A673 (cell line): ENCODE measurements at regions of chr16 and their contacts with region 1.

Region 1: DNA sequence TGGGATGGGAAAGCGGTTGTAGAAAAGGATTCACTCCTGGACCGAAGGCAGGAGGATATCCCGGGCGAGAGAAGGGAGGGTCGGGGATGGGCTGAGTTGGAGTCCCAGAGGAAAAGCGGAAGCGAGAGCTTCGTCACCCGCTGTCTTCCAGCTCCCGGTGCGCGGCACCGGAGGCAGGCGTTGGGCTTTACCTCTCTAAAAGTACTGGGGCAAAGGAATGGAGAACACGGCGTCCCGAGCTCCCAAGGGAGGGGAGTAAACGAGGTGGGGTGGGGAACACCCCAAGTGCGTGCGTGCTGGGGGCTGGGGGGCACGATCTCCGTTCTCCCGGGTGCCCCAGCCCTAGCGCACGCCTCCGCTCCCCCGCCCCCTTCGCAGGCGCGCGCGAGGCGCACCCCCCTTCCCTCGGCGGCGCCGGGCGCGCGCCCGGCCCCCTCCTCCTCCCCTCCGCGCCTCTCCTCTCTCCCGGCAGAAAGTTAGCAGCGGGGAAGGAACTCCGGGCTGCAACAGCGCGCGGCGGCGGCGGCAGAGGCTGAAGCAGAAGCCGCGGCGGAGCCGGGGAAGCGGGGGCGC is at the start of gene HS3ST4:
- DNase-seq: peak; percentile 85
- H3K4me3 ChIP-seq: peak within 1 kb of the TSS; percentile 75
- H3K27ac ChIP-seq: peak within 1 kb of the TSS; percentile 74
- H3K4me1 ChIP-seq: peaks cover 42% of the 10 kb centered on the region
- H3K27me3 ChIP-seq: no peaks in the 10 kb centered on the region
- CTCF ChIP-seq: no peak
- total RNA-seq, gene HS3ST4: 33.5 and 34.0 TPM in 2 replicates

Region 2: DNA sequence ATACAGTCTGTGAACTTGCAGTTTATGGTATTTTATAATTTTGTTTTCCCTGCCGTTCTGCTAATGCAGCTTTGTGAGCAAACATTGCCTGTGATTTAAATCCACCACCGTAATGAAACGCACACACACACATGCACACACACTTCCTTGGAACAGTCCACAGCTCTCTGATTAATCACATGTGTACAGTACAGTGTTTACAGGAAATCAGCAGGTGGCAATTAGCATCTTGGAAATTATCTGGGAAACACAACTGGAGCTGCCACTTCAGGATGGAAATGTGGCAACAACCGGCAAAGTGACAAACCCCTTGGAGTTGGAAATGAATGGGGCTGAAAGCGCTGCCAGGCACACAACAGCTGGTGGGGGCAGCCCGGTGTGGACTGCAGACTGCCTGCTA is 421.0 kb before region 1 on chr16:
- CTCF ChIA-PET with region 1: no interaction called
- POLR2A ChIA-PET with region 1: no interaction called
- intact Hi-C with region 1: loop called (anchors 10 kb)
- DNase-seq: peak; percentile 60
- H3K4me3 ChIP-seq: no peak overlapping the region
- H3K27ac ChIP-seq: no peak overlapping the region
- H3K4me1 ChIP-seq: peaks cover 10% of the 10 kb centered on the region
- H3K27me3 ChIP-seq: no peaks in the 10 kb centered on the region
- CTCF ChIP-seq: no peak

Region 3: GRCh38 chr16:25729188-25729915 is 37.7 kb after region 1 on chr16:
- CTCF ChIA-PET with region 1: no interaction called
- POLR2A ChIA-PET with region 1: no interaction called
- intact Hi-C with region 1: no loop called
- DNase-seq: peak; percentile 80
- H3K4me3 ChIP-seq: no peak overlapping the region
- H3K27ac ChIP-seq: no peak overlapping the region
- H3K4me1 ChIP-seq: peaks cover 52% of the 10 kb centered on the region
- H3K27me3 ChIP-seq: no peaks in the 10 kb centered on the region
- CTCF ChIP-seq: no peak

Region 4: DNA sequence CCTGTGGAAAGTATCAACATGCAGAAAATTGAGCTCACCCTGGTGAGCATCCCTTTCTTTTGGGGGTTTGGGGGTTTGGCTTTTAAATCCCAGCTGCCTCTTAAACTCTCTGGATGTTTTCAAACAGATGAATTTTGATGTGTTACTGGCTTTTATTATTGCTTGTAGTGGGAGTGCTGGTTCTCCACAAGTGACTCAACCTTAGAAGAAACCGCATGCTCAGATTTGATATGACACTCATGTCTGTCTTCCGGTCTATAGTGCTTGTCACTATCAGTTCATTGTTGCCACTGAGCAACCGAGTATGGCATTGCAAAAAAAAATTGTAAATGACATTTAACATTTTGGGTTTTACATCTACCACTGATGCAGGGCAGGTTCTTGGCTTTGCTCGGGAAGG is 104.6 kb after region 1 on chr16:
- CTCF ChIA-PET with region 1: no interaction called
- POLR2A ChIA-PET with region 1: interaction called, 3 read pairs
- intact Hi-C with region 1: loop called (anchors 5 kb)
- DNase-seq: no peak
- H3K4me3 ChIP-seq: no peak overlapping the region
- H3K27ac ChIP-seq: peak overlapping the region; percentile 58
- H3K4me1 ChIP-seq: peaks cover 52% of the 10 kb centered on the region
- H3K27me3 ChIP-seq: no peaks in the 10 kb centered on the region
- CTCF ChIP-seq: no peak

Region 5: GRCh38 chr16:25817876-25818275 is 126.3 kb after region 1 on chr16:
- CTCF ChIA-PET with region 1: no interaction called
- POLR2A ChIA-PET with region 1: no interaction called
- intact Hi-C with region 1: loop called (anchors 5 kb)
- DNase-seq: no peak
- H3K4me3 ChIP-seq: no peak overlapping the region
- H3K27ac ChIP-seq: peak overlapping the region; percentile 73
- H3K4me1 ChIP-seq: peaks cover 15% of the 10 kb centered on the region
- H3K27me3 ChIP-seq: no peaks in the 10 kb centered on the region
- CTCF ChIP-seq: no peak